HEK293 (cell line): ENCODE measurements at regions of chr2 and their contacts with region 1.

Region 1: DNA sequence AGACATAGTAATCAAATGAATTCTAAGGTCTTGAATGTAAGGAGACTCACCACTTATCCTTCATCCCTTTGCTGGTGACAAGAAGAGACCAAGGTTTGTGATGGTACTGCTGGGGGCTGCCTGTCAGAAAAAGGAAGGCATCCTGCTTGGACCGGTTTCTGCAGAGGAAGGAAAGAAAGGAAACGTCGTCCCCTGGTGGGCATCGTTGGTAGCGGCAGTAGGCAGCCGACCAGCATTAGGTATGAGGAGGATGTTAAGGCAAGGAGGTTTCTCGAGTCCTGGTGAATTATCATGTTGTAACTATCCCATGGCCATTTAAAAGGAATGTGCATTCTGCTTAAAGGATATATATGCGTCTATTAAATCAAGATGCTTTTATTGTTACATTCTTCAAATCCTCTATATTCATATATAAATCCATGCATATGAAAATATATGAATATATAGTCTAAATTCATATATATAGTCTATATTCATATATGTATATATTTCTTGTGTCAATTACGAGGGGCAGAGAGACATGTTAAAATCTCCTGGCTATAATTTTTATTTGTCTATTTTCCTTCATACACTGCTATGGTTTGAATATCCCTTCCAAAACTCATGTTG is 94.4 kb upstream of the TGFA start:
- H3K4me3 ChIP-seq: no peak overlapping the region
- H3K27ac ChIP-seq: no peak overlapping the region
- H3K4me1 ChIP-seq: no peaks in the 10 kb centered on the region
- CTCF ChIP-seq: peak; percentile 83

Region 2: GRCh38 chr2:70340921-70341765 is 306.8 kb before region 1 on chr2:
- CTCF ChIA-PET with region 1: interaction called, 53 read pairs
- POLR2A ChIA-PET with region 1: no interaction called
- H3K4me3 ChIP-seq: no peak overlapping the region
- H3K27ac ChIP-seq: no peak overlapping the region
- H3K4me1 ChIP-seq: no peaks in the 10 kb centered on the region
- CTCF ChIP-seq: peak; percentile 88

Region 3: GRCh38 chr2:70553334-70553583 is 94.7 kb before region 1 on chr2:
- CTCF ChIA-PET with region 1: interaction called, 10 read pairs
- POLR2A ChIA-PET with region 1: no interaction called
- H3K4me3 ChIP-seq: peak overlapping the region; percentile 55
- H3K27ac ChIP-seq: peak overlapping the region; percentile 22; the same call in 1 of the 2 replicates
- H3K4me1 ChIP-seq: 0 out of 2 replicates have a peak, but pooled peaks cover 9% of the 10 kb centered on the region
- CTCF ChIP-seq: no peak

Region 4: DNA sequence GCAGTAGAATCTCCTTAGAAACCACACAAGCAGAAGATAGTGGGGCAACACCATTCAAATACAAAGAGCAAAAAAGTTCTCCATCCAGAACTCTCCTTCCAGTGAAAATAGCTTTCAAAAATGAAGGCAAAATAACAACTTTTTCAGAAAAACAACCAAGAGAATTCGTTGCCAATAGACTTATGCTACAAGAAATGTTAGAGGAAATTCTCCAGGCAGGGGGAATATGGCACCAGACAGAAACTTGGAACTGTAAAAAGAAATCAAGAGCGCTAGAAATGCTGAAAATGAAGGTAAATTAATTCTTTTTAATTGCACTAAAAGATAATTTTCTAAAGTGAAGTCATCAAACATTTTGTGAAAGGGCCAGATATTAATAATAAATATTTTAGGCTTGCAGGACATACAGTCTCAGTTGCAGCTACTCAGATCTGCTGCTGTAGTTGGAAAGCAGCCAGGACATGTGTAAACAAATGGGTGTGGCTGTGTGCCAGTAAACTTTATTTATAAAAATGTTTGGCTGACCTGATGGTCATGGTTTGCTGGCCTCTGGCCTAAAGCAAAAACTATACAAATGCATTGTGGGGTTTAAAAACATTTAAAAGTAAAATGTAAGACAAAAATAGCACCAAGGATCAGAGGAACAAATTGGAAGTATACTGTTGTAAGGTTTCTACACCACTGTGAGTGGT is 20.6 kb before region 1 on chr2:
- CTCF ChIA-PET with region 1: interaction called, 12 read pairs
- POLR2A ChIA-PET with region 1: no interaction called
- H3K4me3 ChIP-seq: no peak overlapping the region
- H3K27ac ChIP-seq: no peak overlapping the region
- H3K4me1 ChIP-seq: no peaks in the 10 kb centered on the region
- CTCF ChIP-seq: no peak

Region 5: DNA sequence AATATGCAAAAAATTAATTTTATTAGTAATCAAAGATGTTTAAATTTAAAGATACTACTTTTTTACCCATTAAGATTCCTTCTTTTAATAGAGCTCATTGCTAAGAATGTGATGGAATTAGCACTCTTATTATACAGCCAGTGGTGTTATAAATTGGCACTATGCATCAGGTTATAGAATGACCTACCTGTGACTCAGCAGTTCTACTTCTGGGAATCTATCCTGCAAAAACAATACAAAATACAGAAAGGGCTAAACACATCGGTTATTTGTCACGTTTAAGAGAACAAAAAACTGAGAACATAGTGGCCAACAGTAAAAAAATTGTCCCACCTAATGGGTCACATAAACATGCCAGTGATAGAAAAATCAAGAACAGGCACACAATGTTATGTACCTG is 129.5 kb after region 1 on chr2:
- CTCF ChIA-PET with region 1: no interaction called
- POLR2A ChIA-PET with region 1: no interaction called
- H3K4me3 ChIP-seq: no peak overlapping the region
- H3K27ac ChIP-seq: no peak overlapping the region
- H3K4me1 ChIP-seq: no peaks in the 10 kb centered on the region
- CTCF ChIP-seq: no peak